ENCODE measurements at regions of chr10 and their contacts with region 1.

Region 1: GRCh38 chr10:31851216-31851615 is 77.4 kb downstream of the ARHGAP12 start:
- DNase-seq: no peak
- ATAC-seq: no peak
- H3K4me3 ChIP-seq: no peak overlapping the region
- H3K27ac ChIP-seq: no peak overlapping the region
- H3K4me1 ChIP-seq: no peaks in the 10 kb centered on the region
- H3K27me3 ChIP-seq: no peaks in the 10 kb centered on the region
- CTCF ChIP-seq: no peak
- POLR2A ChIP-seq: no peak

Region 2: GRCh38 chr10:31952066-31952465 is 100.8 kb after region 1 on chr10:
- intact Hi-C with region 1: loop called in 1 of 2 experiments (anchors 10 kb)
- DNase-seq: no peak
- ATAC-seq: no peak
- H3K4me3 ChIP-seq: no peak overlapping the region
- H3K27ac ChIP-seq: no peak overlapping the region
- H3K4me1 ChIP-seq: no peaks in the 10 kb centered on the region
- H3K27me3 ChIP-seq: no peaks in the 10 kb centered on the region
- CTCF ChIP-seq: no peak
- POLR2A ChIP-seq: no peak

Measured in right lobe of liver (tissue), 6 donors.